ENCODE measurements at regions of chr1 and their contacts with region 1.

Region 1: DNA sequence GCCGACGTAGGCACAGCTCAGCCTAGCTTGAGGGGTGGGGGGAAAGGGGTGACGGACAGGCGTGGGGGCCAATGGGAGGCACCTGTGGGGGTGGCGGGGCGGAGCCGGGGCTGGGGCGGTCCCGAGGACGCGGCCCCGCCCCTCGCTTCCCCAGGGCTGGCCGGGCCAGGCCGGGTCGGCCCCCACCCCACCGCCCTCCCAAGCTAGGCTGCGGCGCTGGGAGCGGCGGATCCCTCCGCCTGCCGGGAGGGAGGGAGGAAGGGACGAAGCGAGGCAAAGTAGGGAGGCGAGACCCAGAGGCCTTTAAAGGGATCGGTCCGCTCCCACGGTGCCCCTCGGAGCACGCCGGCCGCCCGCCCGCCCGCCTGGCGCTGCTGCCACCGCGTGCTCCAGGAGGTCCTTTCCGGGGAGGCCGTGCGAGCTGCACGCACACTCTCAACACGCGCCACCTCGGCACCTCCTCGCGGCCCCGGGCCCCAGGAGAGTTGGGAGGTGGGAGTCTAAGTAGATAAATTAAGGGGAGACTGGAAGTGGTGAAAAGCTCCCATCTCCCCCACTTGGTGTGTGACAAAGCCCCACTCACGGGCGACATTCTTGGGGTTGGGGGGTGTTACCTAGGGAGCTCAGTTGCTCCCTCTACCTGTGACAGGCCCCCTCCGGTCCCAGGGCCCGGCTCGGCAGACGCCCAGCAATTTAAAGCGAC is 373 bp upstream of the MEF2D start:
- DNase-seq: peak; percentile 94
- H3K4me3 ChIP-seq: peak overlapping the region; percentile 93
- H3K4me3 Mint-ChIP-seq: peak overlapping the region; percentile 89
- H3K27ac Mint-ChIP-seq: peak overlapping the region; percentile 94
- H3K4me1 ChIP-seq: peaks cover 48% of the 10 kb centered on the region
- H3K4me1 Mint-ChIP-seq: peaks cover 33% of the 10 kb centered on the region
- H3K27me3 ChIP-seq: no peaks in the 10 kb centered on the region
- H3K27me3 Mint-ChIP-seq: no peaks in the 10 kb centered on the region
- CTCF ChIP-seq: peak; percentile 62 to 77

Region 2: DNA sequence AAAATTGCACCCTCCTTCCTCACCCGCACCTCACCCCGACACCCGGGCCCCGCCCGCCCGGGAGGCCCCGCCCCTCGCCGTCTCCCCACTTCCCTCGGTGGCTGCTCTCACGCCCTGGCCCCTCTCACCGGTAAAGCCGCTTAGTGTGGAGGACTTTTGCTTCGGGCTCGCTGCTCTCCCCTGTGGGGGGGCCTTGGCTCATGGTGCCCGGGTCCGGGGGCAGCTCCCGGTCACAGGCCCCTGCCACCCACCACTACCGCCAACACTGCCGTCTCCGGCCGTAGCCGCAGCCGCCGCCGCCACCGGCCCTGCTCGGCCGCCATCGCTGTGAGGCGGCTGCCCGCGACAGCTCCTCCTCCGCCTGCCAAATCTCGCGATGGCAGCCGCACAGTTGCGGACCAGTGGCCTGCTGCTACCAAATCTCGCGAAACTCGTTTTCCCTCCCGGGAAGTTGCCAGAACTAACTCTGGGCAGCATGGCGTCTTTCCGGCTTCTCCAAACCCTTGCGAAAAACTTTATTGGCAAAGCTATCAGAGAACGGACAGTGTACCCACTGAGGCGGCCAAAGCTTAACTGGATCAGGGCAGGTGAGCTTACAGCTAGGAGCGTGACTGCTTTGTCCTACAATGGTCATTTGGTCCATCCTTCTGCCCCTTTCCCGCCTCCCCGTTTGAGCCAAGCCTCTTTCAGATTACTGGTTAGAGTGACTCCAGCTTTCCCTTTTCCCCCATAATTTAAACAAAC is 218.3 kb before region 1 on chr1 and contains the start of gene SMG5:
- CTCF ChIA-PET with region 1: no interaction called
- POLR2A ChIA-PET with region 1: interaction called, 12 read pairs
- intact Hi-C with region 1: no loop called
- DNase-seq: peak; percentile 98
- H3K4me3 ChIP-seq: peak within 1 kb of the TSS; percentile 78
- H3K4me3 Mint-ChIP-seq: peak within 1 kb of the TSS; percentile 78
- H3K27ac Mint-ChIP-seq: peak within 1 kb of the TSS; percentile 61
- H3K4me1 ChIP-seq: peaks cover 24% of the 10 kb centered on the region
- H3K4me1 Mint-ChIP-seq: peaks cover 17% of the 10 kb centered on the region
- H3K27me3 ChIP-seq: no peaks in the 10 kb centered on the region
- H3K27me3 Mint-ChIP-seq: no peaks in the 10 kb centered on the region
- CTCF ChIP-seq: no peak
- total RNA-seq, gene SMG5: 146 and 155 TPM in 2 replicates

Region 3: GRCh38 chr1:156407344-156407743 is 93.6 kb before region 1 on chr1:
- CTCF ChIA-PET with region 1: no interaction called
- POLR2A ChIA-PET with region 1: no interaction called
- intact Hi-C with region 1: no loop called
- DNase-seq: no peak
- H3K4me3 ChIP-seq: no peak overlapping the region
- H3K4me3 Mint-ChIP-seq: no peak overlapping the region
- H3K27ac Mint-ChIP-seq: no peak overlapping the region
- H3K4me1 ChIP-seq: peaks cover 20% of the 10 kb centered on the region
- H3K4me1 Mint-ChIP-seq: no peaks in the 10 kb centered on the region
- H3K27me3 ChIP-seq: no peaks in the 10 kb centered on the region
- H3K27me3 Mint-ChIP-seq: no peaks in the 10 kb centered on the region
- CTCF ChIP-seq: no peak

Region 4: DNA sequence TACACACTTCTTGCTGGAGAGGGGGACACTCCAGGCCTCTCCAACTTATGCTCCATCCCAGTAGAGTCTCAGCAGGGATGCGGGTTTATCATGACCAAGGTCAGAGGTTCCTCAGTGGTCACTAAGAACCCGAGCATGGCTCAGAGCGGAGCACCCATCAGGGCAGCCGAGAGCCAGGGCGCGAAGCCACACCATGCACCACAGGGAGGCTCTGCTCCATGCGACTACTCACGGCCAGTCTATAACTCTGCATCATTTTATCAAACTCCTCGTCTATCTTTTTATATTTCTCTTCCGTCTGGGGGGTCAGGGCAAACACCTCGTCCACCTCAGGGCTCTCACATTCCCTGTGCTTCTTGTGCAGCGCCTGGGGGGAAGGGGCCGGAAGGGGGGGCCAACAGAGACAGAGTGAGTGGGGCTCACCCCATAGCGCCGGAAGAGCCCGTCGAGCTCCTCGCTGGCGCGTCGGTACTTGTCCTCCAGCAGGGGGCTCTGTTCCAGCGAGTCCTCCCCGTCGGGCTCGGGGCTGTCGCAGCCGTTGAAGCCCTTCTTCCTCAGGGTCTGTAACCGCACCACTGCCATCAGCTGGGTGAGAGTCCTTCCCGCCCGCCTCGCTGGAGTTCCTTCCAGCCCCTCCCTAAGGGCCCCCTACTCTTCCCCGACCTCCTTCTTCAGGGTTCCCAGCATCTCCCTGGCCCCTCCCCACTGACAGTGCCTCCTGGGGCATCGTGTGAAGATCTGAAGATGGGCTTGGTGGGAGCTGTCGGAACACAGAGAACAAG is 20.3 kb before region 1 on chr1:
- CTCF ChIA-PET with region 1: interaction called, 15 read pairs
- POLR2A ChIA-PET with region 1: interaction called, 14 read pairs
- intact Hi-C with region 1: no loop called
- DNase-seq: peak in 1 of 2 experiments; percentile 52
- H3K4me3 ChIP-seq: no peak overlapping the region
- H3K4me3 Mint-ChIP-seq: no peak overlapping the region
- H3K27ac Mint-ChIP-seq: no peak overlapping the region
- H3K4me1 ChIP-seq: no peaks in the 10 kb centered on the region
- H3K4me1 Mint-ChIP-seq: no peaks in the 10 kb centered on the region
- H3K27me3 ChIP-seq: no peaks in the 10 kb centered on the region
- H3K27me3 Mint-ChIP-seq: no peaks in the 10 kb centered on the region
- CTCF ChIP-seq: peak; percentile 63 to 68

Region 5: DNA sequence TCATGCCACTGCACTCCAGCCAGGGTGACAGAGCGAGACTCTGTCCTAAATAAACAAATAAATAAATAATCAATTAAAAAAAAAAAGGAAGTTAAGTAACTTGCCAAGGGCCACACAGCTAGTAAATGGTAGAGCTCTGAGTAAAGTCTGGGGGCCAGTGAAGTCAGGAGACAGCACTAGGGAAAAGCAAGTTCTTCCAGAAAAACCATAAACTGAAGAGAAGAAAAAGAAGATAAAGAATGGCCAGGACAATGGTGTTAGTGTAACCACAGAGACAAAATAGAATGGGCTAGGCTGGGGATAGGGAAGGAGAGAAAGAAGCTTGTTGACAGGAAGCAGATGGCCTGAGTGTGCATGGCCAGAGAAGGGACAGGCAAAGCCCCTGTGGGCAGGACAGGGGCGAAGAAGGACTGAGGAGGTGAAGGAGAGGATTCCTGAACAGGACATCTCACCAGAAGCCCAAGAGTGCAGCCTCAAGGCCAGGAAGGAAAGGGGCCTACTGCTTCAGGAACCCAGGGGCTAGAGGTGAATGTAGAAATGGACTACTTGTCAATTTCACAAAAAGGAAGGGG is 42.0 kb after region 1 on chr1:
- CTCF ChIA-PET with region 1: interaction called, 4 read pairs
- POLR2A ChIA-PET with region 1: no interaction called
- intact Hi-C with region 1: loop called (anchors 2 kb)
- DNase-seq: peak in 1 of 2 experiments; percentile 23
- H3K4me3 ChIP-seq: no peak overlapping the region
- H3K4me3 Mint-ChIP-seq: no peak overlapping the region
- H3K27ac Mint-ChIP-seq: peak overlapping the region; percentile 80
- H3K4me1 ChIP-seq: peaks cover 5% of the 10 kb centered on the region; the same call in 1 of the 2 replicates
- H3K4me1 Mint-ChIP-seq: peaks cover 16% of the 10 kb centered on the region
- H3K27me3 ChIP-seq: no peaks in the 10 kb centered on the region
- H3K27me3 Mint-ChIP-seq: no peaks in the 10 kb centered on the region
- CTCF ChIP-seq: no peak

Region 6: DNA sequence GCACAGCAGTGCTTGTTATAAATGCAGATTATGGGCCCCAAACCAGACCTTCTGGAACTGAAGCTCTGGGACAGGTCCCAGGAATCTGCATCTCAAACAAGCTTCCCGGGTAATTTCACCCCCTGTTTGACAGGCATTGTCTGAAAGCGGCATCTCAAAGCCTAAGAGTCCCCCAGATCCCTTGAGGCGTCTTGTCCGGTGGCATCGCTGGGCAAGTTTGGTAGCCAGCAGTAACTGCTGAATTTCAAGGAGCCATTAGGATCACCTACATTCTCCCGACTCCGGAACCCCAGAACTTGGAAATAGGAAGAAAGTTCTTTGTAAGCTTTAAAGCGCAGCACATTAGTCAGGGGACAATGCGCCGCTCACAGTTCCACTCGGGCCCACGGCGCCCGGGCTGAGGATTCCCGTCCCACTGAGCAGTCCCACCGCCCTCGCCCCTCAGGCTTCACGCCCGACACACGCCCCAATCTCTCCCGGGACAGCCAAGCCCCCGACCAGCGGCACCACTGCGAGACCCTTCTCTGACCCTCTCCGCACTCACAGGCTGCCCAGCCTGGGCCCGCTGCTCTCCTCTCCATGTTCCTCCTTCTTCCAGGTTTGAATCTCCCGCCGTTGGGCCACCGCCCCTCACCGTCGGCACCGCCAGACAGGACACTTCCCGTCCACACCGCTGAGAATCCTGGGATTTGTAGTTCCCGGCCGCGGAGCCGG is 71.2 kb after region 1 on chr1 and contains the start of gene IQGAP3:
- CTCF ChIA-PET with region 1: interaction called, 3 read pairs
- POLR2A ChIA-PET with region 1: no interaction called
- intact Hi-C with region 1: loop called (anchors 1 kb)
- DNase-seq: peak; percentile 91
- H3K4me3 ChIP-seq: peak within 1 kb of the TSS; percentile 96
- H3K4me3 Mint-ChIP-seq: peak within 1 kb of the TSS; percentile 97
- H3K27ac Mint-ChIP-seq: peak within 1 kb of the TSS; percentile 83
- H3K4me1 ChIP-seq: peaks cover 15% of the 10 kb centered on the region; the same call in 1 of the 2 replicates
- H3K4me1 Mint-ChIP-seq: peaks cover 18% of the 10 kb centered on the region
- H3K27me3 ChIP-seq: no peaks in the 10 kb centered on the region
- H3K27me3 Mint-ChIP-seq: no peaks in the 10 kb centered on the region
- CTCF ChIP-seq: no peak
- total RNA-seq, gene IQGAP3: 35.8 and 37.6 TPM in 2 replicates

Region 7: GRCh38 chr1:156813750-156814570 is 313.0 kb after region 1 on chr1:
- CTCF ChIA-PET with region 1: no interaction called
- POLR2A ChIA-PET with region 1: no interaction called
- intact Hi-C with region 1: no loop called
- DNase-seq: peak; percentile 81 to 85
- H3K4me3 ChIP-seq: peak overlapping the region; percentile 55
- H3K4me3 Mint-ChIP-seq: peak overlapping the region; percentile 74
- H3K27ac Mint-ChIP-seq: peak overlapping the region; percentile 53
- H3K4me1 ChIP-seq: peaks cover 11% of the 10 kb centered on the region; the same call in 1 of the 2 replicates
- H3K4me1 Mint-ChIP-seq: no peaks in the 10 kb centered on the region
- H3K27me3 ChIP-seq: no peaks in the 10 kb centered on the region
- H3K27me3 Mint-ChIP-seq: no peaks in the 10 kb centered on the region
- CTCF ChIP-seq: peak; percentile 50 to 87